ENCODE measurements at regions of chr1 and their contacts with region 1.

Region 1: DNA sequence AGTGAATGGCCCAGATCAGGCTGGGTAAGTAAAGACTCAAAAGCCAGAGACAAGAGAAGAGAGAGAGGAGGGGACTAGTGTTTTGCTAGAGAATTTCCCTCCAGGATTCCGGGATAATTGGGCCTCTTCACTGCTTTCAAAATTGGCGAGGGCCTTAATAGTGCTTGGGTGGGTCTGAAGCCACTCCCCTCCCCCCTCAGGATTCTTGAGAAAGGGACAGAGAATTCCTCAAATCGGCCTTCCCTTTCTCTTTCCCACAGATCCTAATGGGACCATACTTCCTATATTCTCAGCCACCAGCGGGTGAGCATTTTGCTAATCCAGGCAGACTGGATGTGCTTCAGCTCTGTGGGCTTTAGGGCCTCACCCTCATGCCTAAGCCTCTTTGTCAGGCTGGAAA is 11.9 kb downstream of the SFN start:
- DNase-seq: no peak
- ATAC-seq: no peak
- H3K4me3 ChIP-seq: no peak overlapping the region
- H3K27ac ChIP-seq: no peak overlapping the region
- H3K4me1 ChIP-seq: peaks cover 0 to 4% of the 10 kb centered on the region in 2 donors
- H3K27me3 ChIP-seq: no peaks in the 10 kb centered on the region
- CTCF ChIP-seq: no peak
- POLR2A ChIP-seq: no peak

Region 2: DNA sequence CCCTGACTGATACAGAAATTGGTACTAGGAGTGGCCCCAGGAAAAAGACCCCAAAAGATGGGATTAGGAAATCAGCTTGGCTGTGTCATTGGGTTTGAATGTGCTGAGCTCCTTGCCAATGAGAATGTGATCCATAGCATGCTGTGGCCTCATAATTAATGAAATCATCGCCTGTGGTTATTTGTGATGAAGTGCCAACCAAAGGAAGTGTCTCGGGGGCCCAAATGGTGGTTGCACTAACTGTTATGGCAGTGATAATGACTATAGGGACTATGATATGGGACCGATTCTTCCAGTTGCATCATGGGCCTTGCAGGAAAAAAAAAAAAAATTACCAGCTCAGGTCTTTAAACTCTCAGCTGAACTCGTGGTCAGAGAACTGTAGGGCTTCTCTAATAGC is 63.8 kb before region 1 on chr1:
- in situ Hi-C with region 1: no loop called
- intact Hi-C with region 1: loop called (anchors 5 kb)
- DNase-seq: no peak
- ATAC-seq: no peak
- H3K4me3 ChIP-seq: no peak overlapping the region
- H3K27ac ChIP-seq: no peak overlapping the region
- H3K4me1 ChIP-seq: no peaks in the 10 kb centered on the region
- H3K27me3 ChIP-seq: no peaks in the 10 kb centered on the region
- CTCF ChIP-seq: no peak
- POLR2A ChIP-seq: no peak

Region 3: GRCh38 chr1:26853156-26853555 is 21.7 kb before region 1 on chr1:
- in situ Hi-C with region 1: no loop called
- intact Hi-C with region 1: loop called (anchors 1 kb)
- DNase-seq: peak; percentile 69 to 83
- ATAC-seq: peak; percentile 90 to 97
- H3K4me3 ChIP-seq: no peak overlapping the region
- H3K27ac ChIP-seq: no peak overlapping the region
- H3K4me1 ChIP-seq: no peaks in the 10 kb centered on the region
- H3K27me3 ChIP-seq: no peaks in the 10 kb centered on the region
- CTCF ChIP-seq: peak; percentile 71 to 92 (median 84)
- POLR2A ChIP-seq: no peak

Region 4: DNA sequence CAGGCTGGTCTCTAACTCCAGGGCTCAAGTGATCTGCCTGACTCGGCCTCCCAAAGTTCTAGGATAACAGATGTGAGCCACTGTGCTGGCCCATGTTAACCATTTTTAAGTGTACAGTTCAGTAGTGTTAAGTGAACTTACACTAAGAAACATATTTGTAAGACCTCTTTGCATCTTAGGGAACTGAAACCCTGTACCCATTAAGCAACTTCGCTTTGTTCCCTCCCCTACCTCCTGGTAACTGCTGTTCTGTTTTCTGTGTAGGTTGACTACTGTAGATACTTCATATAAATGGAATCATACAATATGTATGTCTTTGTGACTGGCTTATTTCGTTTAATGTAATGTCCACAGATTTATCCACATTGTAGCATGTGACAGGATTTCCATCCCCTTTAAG is 57.6 kb after region 1 on chr1:
- in situ Hi-C with region 1: no loop called
- intact Hi-C with region 1: no loop called
- DNase-seq: no peak
- ATAC-seq: no peak
- H3K4me3 ChIP-seq: no peak overlapping the region
- H3K27ac ChIP-seq: no peak overlapping the region
- H3K4me1 ChIP-seq: no peaks in the 10 kb centered on the region
- H3K27me3 ChIP-seq: no peaks in the 10 kb centered on the region
- CTCF ChIP-seq: no peak
- POLR2A ChIP-seq: no peak

Measured in gastrocnemius medialis (tissue), 4 donors.